Dorsolateral prefrontal cortex (tissue), 120 donors: ENCODE measurements at regions of chr12 and their contacts with region 1.

Region 1: GRCh38 chr12:39692258-39692853 is 72.8 kb upstream of the ABCD2 start:
- DNase-seq: no peak
- H3K4me3 ChIP-seq: no peak overlapping the region
- H3K27ac ChIP-seq: no peak overlapping the region
- H3K27me3 ChIP-seq: no peaks in the 10 kb centered on the region
- CTCF ChIP-seq: peak in 55 of 56 donors; percentile 17 to 75 (median 49)

Region 2: DNA sequence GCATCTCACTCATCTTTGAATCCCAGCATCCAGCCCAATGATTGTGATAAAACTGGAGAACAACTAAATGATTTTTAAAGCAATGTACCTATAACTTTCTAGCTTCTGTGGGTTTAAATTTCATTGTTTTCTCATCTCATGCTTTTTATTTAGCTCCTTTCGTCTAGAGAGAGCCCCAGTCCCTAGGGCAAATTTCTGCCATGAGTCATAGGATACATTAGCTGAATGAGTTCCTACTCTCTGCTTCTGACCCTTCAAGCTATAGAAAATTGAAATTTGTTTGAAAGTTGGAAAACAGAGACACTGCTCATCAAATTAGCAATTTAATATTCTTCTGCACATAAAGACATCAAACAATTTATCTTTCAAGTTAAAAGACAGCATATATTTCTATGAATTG is 363.3 kb before region 1 on chr12:
- intact Hi-C with region 1: loop called in 1 of 2 experiments (anchors 10 kb)
- DNase-seq: no peak
- H3K4me3 ChIP-seq: no peak overlapping the region
- H3K27ac ChIP-seq: no peak overlapping the region
- H3K27me3 ChIP-seq: no peaks in the 10 kb centered on the region
- CTCF ChIP-seq: no peak

Region 3: DNA sequence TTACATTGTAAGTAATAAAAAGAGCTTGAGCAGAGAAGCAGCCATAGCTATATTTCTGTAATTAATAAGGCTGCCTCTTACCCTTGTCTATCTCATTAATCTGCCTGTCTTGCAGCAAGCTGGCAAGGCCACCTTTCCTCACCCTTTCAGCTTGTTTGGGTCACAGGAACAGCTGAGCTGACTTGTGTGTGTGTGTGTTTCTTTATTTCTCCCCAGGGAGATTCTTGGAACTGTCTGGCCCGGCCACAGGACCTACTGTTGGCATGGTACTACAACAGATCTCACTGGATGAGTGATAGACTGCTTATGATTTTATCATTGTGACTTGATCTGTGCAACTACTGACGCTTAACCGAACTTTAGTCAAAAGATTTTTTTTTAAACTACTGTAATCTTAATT is 199.8 kb after region 1 on chr12:
- intact Hi-C with region 1: no loop called
- DNase-seq: no peak
- H3K4me3 ChIP-seq: no peak overlapping the region
- H3K27ac ChIP-seq: no peak overlapping the region
- H3K27me3 ChIP-seq: no peaks in the 10 kb centered on the region
- CTCF ChIP-seq: no peak